ENCODE measurements at regions of chr3 and their contacts with region 1.

Region 1: DNA sequence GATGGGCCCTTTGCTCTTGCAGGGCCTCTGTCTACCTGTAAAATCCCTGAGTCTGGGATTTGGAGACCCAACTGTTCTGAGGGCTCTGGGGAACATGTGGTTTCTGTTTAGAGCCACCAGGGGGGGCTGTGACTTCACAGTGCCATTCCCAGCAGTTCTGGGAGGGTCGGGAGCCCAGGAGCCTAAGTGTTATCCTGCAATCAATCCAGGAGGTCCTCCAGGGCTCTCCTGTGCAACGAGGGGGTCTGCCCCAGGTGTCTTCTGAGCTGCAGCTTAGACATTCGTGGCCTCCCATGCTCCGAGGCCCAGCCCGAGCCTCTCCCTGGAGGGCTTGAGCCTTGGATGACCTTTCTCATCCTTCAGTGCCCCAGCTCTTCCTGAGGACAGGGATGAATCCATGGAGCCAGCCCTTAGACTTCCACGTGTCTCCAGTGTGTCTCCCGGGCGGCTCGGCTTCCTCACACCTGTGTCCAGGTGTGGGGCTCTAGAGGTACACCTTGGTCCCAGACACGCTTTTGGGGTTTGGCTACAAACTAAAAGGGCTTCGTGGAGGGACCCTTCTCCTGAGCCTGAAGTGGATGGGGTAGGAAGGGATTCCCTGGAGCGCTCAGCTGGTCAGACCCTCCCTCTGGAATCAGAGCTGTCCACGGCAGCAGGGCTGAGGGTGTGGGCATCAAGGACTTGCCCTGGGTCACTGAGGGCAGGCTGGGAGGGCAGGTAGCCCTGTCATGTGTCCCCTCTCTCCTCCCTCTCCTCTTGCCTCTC is 20.3 kb upstream of the ABTB1 start:
- DNase-seq: peak; percentile 83

Region 2: DNA sequence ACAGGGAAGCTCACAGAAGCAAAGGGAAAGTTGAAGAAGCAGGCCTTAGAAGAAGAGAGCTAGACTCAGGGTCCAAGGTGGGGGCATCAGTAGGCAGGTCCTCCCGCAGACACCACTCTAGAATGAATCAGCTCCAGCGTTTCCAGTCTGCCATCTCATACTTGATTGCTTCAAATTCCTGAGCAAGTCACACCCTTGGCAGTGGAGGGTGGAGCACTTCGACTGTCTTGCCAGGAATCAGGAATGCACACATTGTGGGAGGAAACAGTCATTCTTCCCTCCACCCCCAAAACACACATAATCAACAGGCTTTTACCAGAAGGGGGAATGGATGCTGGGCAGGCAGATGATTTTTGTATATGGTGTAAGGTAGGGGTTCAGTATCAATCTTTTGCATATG is 869.9 kb before region 1 on chr3:
- intact Hi-C with region 1: no loop called
- DNase-seq: no peak

Region 3: GRCh38 chr3:127967316-127967715 is 314.9 kb after region 1 on chr3:
- intact Hi-C with region 1: loop called (anchors 2 to 5 kb)
- DNase-seq: no peak